ENCODE measurements at regions of chr11 and their contacts with region 1.

Region 1: DNA sequence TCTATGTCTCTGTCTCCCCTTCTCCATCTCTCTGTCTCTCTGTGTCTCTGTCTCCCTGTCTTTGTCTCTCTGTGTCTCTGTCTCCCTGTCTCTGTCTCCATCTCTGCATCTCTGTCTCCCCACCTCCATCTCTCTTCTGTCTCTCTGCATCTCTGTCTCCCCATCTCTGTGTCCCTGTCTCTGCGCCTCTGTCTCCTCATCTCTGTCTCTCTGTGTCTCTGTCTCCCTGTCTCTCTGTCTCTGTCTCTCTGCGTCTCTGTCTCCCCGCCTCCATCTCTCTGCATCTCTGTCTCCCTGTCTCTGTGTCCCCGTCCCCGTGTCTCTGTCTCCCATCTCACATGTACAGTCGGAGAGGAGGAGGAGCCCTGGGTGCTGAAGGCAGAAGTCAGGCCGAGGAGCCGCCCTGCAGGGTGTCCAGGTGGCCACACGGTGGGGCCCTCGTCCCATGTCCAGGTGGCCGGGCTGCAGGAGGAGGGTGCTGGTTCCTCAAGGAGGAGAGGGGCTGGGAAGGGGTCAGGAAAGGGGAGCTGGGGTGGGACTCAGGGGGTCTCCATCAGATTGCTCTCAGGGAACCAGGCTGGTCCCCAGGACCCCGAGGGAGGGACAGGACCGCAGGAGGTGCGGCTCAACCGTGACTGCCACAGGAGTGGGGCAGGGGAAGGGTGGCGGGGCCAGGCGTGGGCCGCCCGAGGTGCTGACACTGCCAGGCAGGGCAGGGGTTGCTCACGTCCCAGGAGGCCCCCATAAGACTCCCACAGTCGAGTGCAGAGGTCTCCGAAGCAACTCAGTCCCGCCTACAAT is 25.6 kb upstream of the TH start:
- DNase-seq: peak; percentile 75 to 80
- ATAC-seq: peak; percentile 72 to 92
- H3K4me3 ChIP-seq: no peak overlapping the region
- H3K27ac ChIP-seq: no peak overlapping the region
- H3K4me1 ChIP-seq: no peaks in the 10 kb centered on the region
- CTCF ChIP-seq: peak; percentile 82
- EP300 ChIP-seq: no peak
- POLR2A ChIP-seq: no peak
- RAD21 ChIP-seq: peak; percentile 94

Region 2: DNA sequence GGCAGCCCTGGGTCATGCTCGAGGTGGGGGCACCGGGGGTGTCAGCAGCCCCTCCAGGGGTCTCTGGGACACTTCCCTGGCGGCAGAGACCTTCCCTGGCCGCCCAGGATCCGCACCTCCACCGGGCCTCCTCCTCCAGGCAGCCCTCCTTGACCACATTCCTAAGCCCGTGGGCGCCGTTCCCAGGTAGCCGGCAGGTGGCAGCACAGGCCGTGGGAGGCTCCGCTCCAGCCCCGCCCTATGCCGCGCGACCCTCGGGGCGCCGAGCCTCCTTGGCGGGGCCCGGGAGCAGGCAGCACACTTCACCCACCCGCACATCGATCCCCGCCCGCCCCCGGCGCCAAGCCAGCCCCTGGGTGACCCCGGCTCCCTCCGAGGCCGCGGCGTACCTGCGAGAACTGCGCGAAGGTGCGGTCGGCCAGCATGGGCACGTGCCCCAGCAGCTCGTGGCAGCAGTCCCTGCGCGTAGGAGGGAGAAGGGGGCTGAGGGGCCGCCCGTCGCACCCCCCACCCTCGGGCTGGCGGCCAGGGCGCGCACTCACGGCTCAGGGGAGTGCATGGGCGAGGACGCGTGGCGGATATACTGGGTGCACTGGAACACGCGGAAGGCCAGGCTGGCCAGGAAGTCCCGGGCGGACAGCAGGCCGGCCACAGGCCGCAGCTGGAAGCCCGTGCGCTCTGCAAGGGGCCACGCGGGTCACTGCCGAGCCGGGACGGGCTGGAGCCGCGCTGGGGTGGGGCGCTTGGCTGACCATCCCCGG is 30.9 kb before region 1 on chr11:
- CTCF ChIA-PET with region 1: interaction called, 26 read pairs
- POLR2A ChIA-PET with region 1: no interaction called
- DNase-seq: peak in 1 of 2 experiments; percentile 42
- ATAC-seq: peak; percentile 25 to 80; a peak in 3 of 6 replicates
- H3K4me3 ChIP-seq: no peak overlapping the region
- H3K27ac ChIP-seq: no peak overlapping the region
- H3K4me1 ChIP-seq: no peaks in the 10 kb centered on the region
- CTCF ChIP-seq: peak; percentile 65
- EP300 ChIP-seq: no peak
- POLR2A ChIP-seq: no peak
- RAD21 ChIP-seq: peak; percentile 43 to 51

Region 3: DNA sequence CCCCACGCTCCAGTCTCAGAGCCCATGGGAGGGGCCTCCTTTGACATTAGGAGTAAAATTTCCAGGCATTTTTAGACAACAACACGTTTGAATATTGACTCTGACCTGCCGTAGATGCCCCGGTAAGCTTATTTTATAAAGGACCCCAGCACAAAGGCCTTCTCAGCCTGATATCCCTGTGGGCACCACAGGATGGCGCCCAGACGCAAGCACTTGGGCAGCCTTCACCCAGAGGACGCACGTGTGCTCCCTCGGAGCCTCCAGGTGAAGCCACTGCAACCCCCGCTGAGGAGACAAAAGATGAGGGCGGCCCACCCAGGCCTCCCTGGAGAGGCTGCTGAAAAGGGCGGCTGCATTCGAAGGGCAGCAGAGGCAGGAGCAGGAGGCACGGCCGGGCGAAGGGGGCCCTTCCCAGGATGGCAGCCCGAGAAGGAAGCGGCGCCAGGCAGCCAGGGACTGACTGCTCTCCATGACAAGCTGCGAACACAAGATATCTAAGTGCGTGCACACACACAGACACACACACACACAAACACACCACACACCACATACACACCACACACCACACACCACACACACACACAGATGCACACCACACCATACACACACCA is 10.4 kb before region 1 on chr11:
- CTCF ChIA-PET with region 1: interaction called, 22 read pairs
- POLR2A ChIA-PET with region 1: no interaction called
- DNase-seq: peak; percentile 76
- ATAC-seq: peak; percentile 72 to 92
- H3K4me3 ChIP-seq: no peak overlapping the region
- H3K27ac ChIP-seq: peak overlapping the region in 1 of 2 experiments; percentile 69; a peak in 2 of 6 replicates
- H3K4me1 ChIP-seq: no peaks in the 10 kb centered on the region
- CTCF ChIP-seq: peak; percentile 56
- EP300 ChIP-seq: no peak
- POLR2A ChIP-seq: no peak
- RAD21 ChIP-seq: peak; percentile 58 to 63; a peak in 4 of 5 replicates

Region 4: GRCh38 chr11:2208691-2209369 is 11.7 kb after region 1 on chr11:
- CTCF ChIA-PET with region 1: interaction called, 30 read pairs
- POLR2A ChIA-PET with region 1: no interaction called
- DNase-seq: peak in 1 of 2 experiments; percentile 38
- ATAC-seq: peak; percentile 49 to 75; a peak in 5 of 6 replicates
- H3K4me3 ChIP-seq: no peak overlapping the region
- H3K27ac ChIP-seq: peak overlapping the region in 1 of 2 experiments; percentile 80; a peak in 2 of 6 replicates
- H3K4me1 ChIP-seq: peaks cover 31% of the 10 kb centered on the region
- CTCF ChIP-seq: no peak
- EP300 ChIP-seq: no peak
- POLR2A ChIP-seq: no peak
- RAD21 ChIP-seq: no peak

Region 5: GRCh38 chr11:2298795-2299761 is 101.9 kb after region 1 on chr11:
- CTCF ChIA-PET with region 1: interaction called, 138 read pairs
- POLR2A ChIA-PET with region 1: no interaction called
- DNase-seq: peak; percentile 57 to 59
- ATAC-seq: peak in 1 of 2 experiments; percentile 81; a peak in 3 of 6 replicates
- H3K4me3 ChIP-seq: no peak overlapping the region
- H3K27ac ChIP-seq: no peak overlapping the region
- H3K4me1 ChIP-seq: no peaks in the 10 kb centered on the region
- CTCF ChIP-seq: peak; percentile 45
- EP300 ChIP-seq: no peak
- POLR2A ChIP-seq: no peak
- RAD21 ChIP-seq: peak; percentile 72 to 81

Region 6: GRCh38 chr11:2348986-2349385 is 151.8 kb after region 1 on chr11:
- CTCF ChIA-PET with region 1: no interaction called
- POLR2A ChIA-PET with region 1: no interaction called
- DNase-seq: no peak
- ATAC-seq: no peak
- H3K4me3 ChIP-seq: no peak overlapping the region
- H3K27ac ChIP-seq: no peak overlapping the region
- H3K4me1 ChIP-seq: no peaks in the 10 kb centered on the region
- CTCF ChIP-seq: no peak
- EP300 ChIP-seq: no peak
- POLR2A ChIP-seq: no peak
- RAD21 ChIP-seq: no peak

Region 7: GRCh38 chr11:2400069-2400760 is 203.0 kb after region 1 on chr11 and contains the start of gene TSSC4:
- CTCF ChIA-PET with region 1: interaction called, 14 read pairs
- POLR2A ChIA-PET with region 1: no interaction called
- DNase-seq: peak; percentile 99 to 100
- ATAC-seq: peak; percentile 86 to 93
- H3K4me3 ChIP-seq: peak within 1 kb of the TSS; percentile 100
- H3K27ac ChIP-seq: peak within 1 kb of the TSS; percentile 97 to 98
- H3K4me1 ChIP-seq: peaks cover 16% of the 10 kb centered on the region
- CTCF ChIP-seq: peak; percentile 91
- EP300 ChIP-seq: no peak
- POLR2A ChIP-seq: peak; percentile 89
- RAD21 ChIP-seq: peak; percentile 60 to 66
- polyA plus RNA-seq, gene TSSC4: 21.8 and 22.2 TPM in 2 replicates

Measured in A549 (cell line).